Ascending aorta (tissue), 2 donors: ENCODE measurements at regions of chr16 and their contacts with region 1.

Region 1: GRCh38 chr16:53022374-53022773 is 30.3 kb downstream of the CHD9NB start:
- DNase-seq: no peak
- H3K4me3 ChIP-seq: no peak overlapping the region
- H3K27ac ChIP-seq: no peak overlapping the region
- H3K4me1 ChIP-seq: no peaks in the 10 kb centered on the region
- H3K27me3 ChIP-seq: no peaks in the 10 kb centered on the region
- CTCF ChIP-seq: peak in 1 of 3 experiments; percentile 54

Region 2: DNA sequence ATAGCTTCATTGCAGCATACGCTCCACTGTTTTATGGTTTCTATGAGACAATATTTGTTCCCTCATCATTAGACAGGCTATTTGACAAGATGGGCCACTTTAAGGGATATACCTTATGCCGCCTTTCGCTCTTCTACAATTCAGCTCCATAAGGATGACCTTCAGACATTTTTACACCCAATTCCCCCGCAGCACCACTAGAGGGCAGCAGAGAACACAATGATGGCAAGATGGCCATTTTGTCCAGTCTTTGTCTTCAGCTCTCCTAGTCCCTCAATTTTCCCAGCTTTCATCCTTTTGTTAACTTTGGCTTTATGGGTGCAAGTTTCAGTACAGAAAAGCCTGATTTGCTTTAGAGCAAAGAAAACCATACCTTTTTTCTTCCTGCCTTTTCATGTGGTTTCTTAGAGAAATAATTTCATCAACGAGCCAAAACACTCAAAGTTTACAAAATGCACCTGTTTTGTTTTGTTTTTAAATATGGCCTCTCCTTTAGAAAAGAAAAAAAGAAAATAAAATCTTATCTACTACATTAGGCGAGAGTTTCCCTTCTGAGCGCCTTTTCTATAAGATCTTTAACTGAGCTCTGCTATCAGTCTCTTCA is 830.7 kb before region 1 on chr16:
- intact Hi-C with region 1: loop called (anchors 2 kb)
- DNase-seq: no peak
- H3K4me3 ChIP-seq: no peak overlapping the region
- H3K27ac ChIP-seq: no peak overlapping the region
- H3K4me1 ChIP-seq: no peaks in the 10 kb centered on the region
- H3K27me3 ChIP-seq: no peaks in the 10 kb centered on the region
- CTCF ChIP-seq: peak; percentile 28 to 77 (median 73)